OCI-LY7 (cell line): ENCODE measurements at regions of chr16 and their contacts with region 1.

Region 1: DNA sequence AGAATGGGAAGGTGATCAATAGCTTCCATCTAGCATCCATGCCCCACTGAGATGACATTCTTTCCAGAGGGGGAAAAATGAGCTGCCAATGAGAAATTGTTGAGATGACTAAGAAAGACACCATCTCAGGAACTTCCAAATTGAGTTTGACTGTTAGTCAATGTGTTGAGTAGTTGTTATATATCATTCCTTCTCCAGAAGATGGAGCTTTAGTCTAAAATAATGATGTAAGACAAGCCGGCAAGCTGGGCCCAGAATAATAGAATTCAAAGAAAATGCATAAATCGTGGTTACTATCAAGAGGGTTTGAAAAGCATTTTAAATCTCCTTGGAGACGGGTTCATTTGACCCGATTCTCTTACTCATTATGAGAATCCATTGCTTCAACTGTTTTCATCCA is 71.0 kb upstream of the ATF7IP2 start:
- DNase-seq: peak; percentile 66
- H3K4me3 ChIP-seq: no peak overlapping the region
- H3K27ac ChIP-seq: no peak overlapping the region
- H3K4me1 ChIP-seq: peaks cover 28% of the 10 kb centered on the region
- CTCF ChIP-seq: peak; percentile 73

Region 2: DNA sequence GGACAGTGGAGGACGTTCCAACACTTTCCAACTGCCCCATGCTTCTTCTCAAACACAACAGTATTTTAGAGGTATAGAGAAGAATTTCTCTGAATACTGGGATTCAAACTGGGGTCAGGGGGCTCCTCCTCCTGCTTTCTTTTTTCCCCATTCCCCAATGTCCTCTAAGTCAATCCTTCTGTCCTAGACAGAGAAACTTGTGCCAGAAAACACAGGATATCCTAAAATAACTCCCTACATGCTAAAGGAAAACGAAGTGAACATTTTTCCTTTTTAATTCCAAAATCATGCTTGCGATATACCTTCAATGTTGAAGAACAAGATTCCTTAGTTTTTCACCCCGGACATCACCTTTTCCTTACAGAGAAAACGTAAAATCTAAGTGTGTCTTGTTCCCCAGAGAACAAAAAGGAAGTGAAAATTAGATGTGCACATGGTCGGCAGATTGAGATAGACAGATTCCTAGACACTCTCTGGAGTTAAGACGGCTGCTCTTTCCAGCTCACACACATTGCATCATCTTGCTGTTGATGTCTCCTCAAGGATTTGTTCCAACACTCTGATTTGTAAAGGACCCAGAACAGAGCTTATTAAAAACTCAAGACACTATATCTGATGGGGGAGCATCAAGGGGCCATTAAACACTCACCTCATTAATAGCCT is 360.8 kb before region 1 on chr16:
- CTCF ChIA-PET with region 1: no interaction called
- POLR2A ChIA-PET with region 1: no interaction called
- intact Hi-C with region 1: no loop called
- DNase-seq: no peak
- H3K4me3 ChIP-seq: no peak overlapping the region
- H3K27ac ChIP-seq: no peak overlapping the region
- H3K4me1 ChIP-seq: no peaks in the 10 kb centered on the region
- CTCF ChIP-seq: no peak

Region 3: GRCh38 chr16:10256784-10257641 is 57.8 kb before region 1 on chr16:
- CTCF ChIA-PET with region 1: no interaction called
- POLR2A ChIA-PET with region 1: no interaction called
- intact Hi-C with region 1: loop called (anchors 5 kb)
- DNase-seq: peak; percentile 67
- H3K4me3 ChIP-seq: no peak overlapping the region
- H3K27ac ChIP-seq: no peak overlapping the region
- H3K4me1 ChIP-seq: peaks cover 17% of the 10 kb centered on the region
- CTCF ChIP-seq: peak; percentile 85

Region 4: DNA sequence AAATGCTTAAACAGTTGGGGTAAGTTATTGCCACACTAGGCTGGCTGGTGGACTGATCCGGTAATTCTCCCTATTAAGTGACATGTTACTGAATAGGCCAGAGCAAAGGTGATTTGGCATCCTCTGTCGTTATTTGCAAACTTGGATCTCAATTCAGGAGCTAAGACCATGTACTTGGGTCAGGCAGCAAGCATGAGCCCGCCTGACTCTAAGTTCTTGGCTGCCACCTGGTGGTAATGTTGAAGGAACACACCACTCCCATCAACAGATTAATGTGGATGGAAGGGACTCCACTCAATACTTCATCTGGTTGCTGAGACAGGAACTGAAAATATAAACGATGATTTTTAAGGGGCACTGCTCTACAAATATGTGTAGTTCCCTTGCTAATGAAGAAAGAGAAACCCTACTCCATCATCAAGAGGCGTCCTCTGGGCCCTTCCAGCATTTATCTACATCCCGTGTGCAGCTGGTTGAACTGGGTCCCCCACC is 194.8 kb after region 1 on chr16:
- CTCF ChIA-PET with region 1: no interaction called
- POLR2A ChIA-PET with region 1: no interaction called
- intact Hi-C with region 1: loop called (anchors 1 kb)
- DNase-seq: peak; percentile 88
- H3K4me3 ChIP-seq: no peak overlapping the region
- H3K27ac ChIP-seq: no peak overlapping the region
- H3K4me1 ChIP-seq: no peaks in the 10 kb centered on the region
- CTCF ChIP-seq: peak; percentile 93